Naive thymus-derived CD4-positive, alpha-beta T cell (primary cell): ENCODE measurements at regions of chr13 and their contacts with region 1.

Region 1: DNA sequence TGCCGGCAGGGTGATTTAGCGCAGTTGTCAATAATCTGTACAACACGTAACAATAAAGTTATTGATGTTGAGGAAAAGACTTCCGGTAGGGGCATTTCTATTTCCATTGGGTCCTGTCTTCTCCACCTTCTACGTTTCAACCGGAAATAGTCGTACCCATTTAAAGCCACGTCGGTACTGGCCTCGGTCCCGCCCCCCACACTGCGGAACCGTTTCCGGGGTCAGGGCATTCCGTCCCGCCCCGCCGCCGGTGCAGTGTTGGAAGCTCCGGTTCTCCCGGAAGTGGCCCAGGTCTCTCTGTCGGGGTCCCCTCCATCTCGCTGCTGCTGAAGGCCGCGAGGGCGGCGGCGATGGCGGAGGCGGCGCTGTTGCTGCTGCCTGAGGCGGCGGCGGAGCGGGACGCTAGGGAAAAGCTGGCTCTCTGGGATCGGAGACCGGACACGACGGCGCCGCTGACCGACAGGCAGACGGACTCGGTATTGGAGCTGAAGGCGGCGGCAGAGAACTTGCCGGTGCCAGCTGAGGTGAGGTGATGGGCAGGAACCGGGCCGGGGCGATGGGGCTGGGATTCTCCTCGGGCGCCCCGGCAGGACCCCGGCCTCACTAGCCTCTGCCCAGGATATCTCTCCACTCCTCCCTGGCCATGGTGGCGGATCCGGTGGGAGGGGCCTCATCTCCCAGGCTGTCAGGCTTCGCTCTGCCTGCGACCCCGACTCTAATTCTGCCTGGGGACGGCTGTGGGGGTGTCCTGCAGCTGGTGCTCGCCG is at the start of gene COG3:
- DNase-seq: peak; percentile 87 to 97 (median 96)
- ATAC-seq: peak; percentile 98
- H3K4me3 ChIP-seq: peak within 1 kb of the TSS; percentile 49
- H3K4me3 Mint-ChIP-seq: peak within 1 kb of the TSS; percentile 90 to 97 (median 95)
- H3K27ac ChIP-seq: peak within 1 kb of the TSS; percentile 92
- H3K27ac Mint-ChIP-seq: peak within 1 kb of the TSS; percentile 81 to 98 (median 94)
- H3K4me1 ChIP-seq: peaks cover 10 to 28% of the 10 kb centered on the region in 2 donors
- H3K4me1 Mint-ChIP-seq: peaks cover 33 to 74% (median 59%) of the 10 kb centered on the region in 7 donors
- H3K27me3 ChIP-seq: no peaks in the 10 kb centered on the region
- H3K27me3 Mint-ChIP-seq: no peaks in the 10 kb centered on the region
- total RNA-seq, gene COG3: 29.7 to 50.1 (median 43.4) TPM

Region 2: DNA sequence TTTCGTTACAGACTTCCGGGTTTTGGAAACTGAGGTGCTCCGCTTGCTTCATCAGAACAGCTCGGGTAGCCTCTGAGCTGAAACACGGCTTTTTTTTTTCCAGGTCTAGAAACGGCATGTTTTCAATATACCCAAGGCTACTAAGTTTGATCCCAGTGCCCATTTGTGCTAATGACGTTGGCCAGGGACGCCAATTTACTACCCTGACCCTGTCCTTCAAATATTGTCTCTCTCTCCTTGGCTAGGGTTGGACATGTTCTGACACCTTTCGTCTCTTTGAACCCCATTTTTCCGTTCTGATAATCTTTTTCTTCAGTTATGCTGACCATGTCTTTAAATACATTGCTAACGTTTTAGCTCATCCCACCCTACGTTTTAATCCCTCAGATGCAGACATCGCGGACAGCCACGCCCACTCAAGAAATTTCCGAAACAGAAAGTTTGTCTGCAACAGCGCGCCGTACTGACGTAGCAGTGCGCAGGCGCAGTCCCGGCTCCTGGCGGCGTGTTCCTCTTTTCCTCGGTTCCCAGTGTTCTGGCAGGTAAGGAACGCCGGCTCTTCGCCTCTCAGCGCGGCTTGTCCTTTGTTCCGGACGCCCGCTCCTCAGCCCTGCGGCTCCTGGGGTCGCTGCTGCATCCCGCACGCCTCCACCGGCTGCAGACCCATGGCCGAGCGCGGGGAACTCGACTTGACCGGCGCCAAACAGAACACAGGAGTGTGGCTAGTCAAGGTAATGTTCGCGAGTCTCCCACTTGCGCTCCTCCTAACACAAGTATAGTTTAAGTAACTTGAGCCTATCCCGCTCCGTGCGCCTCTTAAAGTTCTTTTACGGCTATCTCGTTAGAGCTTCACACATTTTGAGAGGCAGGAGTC is 344.6 kb before region 1 on chr13 and contains the start of gene GTF2F2:
- CTCF ChIA-PET with region 1: no interaction called
- POLR2A ChIA-PET with region 1: no interaction called
- intact Hi-C with region 1: loop called in 1 of 2 experiments (anchors 1 kb)
- DNase-seq: peak; percentile 81 to 89 (median 86)
- ATAC-seq: peak; percentile 80
- H3K4me3 ChIP-seq: peak within 1 kb of the TSS; percentile 80
- H3K4me3 Mint-ChIP-seq: no peak within 1 kb of the TSS
- H3K27ac ChIP-seq: peak within 1 kb of the TSS; percentile 91
- H3K27ac Mint-ChIP-seq: no peak within 1 kb of the TSS
- H3K4me1 ChIP-seq: peaks cover 16 to 21% of the 10 kb centered on the region in 2 donors
- H3K4me1 Mint-ChIP-seq: peaks cover 6 to 17% (median 13%) of the 10 kb centered on the region in 7 donors
- H3K27me3 ChIP-seq: no peaks in the 10 kb centered on the region
- H3K27me3 Mint-ChIP-seq: no peaks in the 10 kb centered on the region
- total RNA-seq, gene GTF2F2: 13.7 to 20.4 (median 15.2) TPM

Region 3: DNA sequence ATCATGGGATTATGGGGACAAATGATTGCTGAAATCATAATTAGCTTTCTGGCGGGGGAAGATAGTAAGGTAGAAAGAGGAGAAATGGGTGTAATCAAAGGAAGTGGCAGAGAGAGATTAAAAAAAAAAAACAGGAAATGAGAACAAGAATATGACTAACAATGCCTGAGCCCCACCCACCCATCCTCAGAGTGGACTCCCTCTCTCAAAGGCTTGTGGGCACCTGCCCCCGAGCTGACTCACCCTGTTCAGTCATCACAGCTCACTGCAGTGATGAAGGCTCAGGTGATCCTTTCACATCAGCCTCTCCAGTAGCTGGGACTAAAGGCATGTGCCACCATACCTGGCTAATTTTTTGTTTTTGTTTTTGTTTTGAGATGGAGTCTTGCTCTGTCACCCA is 97.5 kb before region 1 on chr13:
- CTCF ChIA-PET with region 1: interaction called, 6 read pairs
- POLR2A ChIA-PET with region 1: interaction called, 7 read pairs
- intact Hi-C with region 1: loop called (anchors 1 kb)
- DNase-seq: peak; percentile 38 to 93 (median 82)
- ATAC-seq: peak; percentile 99
- H3K4me3 ChIP-seq: no peak overlapping the region
- H3K4me3 Mint-ChIP-seq: peak overlapping the region; percentile 48 to 80 (median 67)
- H3K27ac ChIP-seq: peak overlapping the region; percentile 31
- H3K27ac Mint-ChIP-seq: peak overlapping the region; percentile 81 to 96 (median 90)
- H3K4me1 ChIP-seq: peaks cover 25 to 27% of the 10 kb centered on the region in 2 donors
- H3K4me1 Mint-ChIP-seq: peaks cover 48 to 62% (median 60%) of the 10 kb centered on the region in 7 donors
- H3K27me3 ChIP-seq: no peaks in the 10 kb centered on the region
- H3K27me3 Mint-ChIP-seq: no peaks in the 10 kb centered on the region

Region 4: DNA sequence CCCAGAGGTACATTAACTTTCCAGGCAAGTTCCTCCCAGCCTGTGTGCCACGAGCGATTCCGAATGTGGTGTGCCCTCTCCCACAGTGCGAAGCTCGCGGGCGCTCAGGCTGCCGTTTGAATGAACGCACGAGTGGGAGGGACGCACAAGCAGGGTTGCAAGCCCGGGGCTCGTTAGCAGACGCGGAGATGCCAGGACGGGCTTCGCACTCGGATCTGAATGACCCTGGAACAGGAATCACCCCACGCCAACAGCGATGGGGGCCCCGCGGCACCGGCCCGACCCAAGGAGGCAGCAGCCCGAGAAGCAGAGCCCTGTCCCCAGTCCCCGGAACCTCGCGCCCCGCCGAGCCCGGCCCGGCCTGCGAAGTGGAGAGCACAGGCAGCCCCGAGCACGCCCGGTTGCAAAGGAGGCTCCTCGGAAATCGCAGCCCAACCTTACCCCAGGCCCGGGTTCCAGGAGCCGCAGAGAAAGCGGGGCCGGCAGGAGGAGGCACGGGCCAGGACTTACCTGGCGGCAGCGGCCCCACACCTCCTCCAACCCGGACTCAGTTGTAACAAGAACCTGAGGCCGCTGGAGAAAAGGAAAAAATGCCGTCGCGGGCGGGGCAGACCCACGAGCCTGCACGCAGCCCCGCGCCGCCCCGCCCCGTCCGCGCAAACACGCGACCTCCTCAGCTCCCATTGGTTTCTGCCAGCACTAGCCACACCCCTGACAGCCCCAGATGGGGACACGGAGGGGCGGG is 46.9 kb before region 1 on chr13 and contains the start of gene SLC25A30:
- CTCF ChIA-PET with region 1: interaction called, 7 read pairs
- POLR2A ChIA-PET with region 1: interaction called, 37 read pairs
- intact Hi-C with region 1: loop called (anchors 1 kb)
- DNase-seq: peak; percentile 73 to 90 (median 87)
- ATAC-seq: peak; percentile 97
- H3K4me3 ChIP-seq: peak within 1 kb of the TSS; percentile 97
- H3K4me3 Mint-ChIP-seq: peak within 1 kb of the TSS; percentile 90 to 98 (median 96)
- H3K27ac ChIP-seq: peak within 1 kb of the TSS; percentile 79
- H3K27ac Mint-ChIP-seq: peak within 1 kb of the TSS; percentile 92 to 99 (median 96)
- H3K4me1 ChIP-seq: peaks cover 4 to 21% of the 10 kb centered on the region in 2 donors
- H3K4me1 Mint-ChIP-seq: peaks cover 0 to 36% (median 27%) of the 10 kb centered on the region in 7 donors
- H3K27me3 ChIP-seq: no peaks in the 10 kb centered on the region
- H3K27me3 Mint-ChIP-seq: no peaks in the 10 kb centered on the region
- total RNA-seq, gene SLC25A30: 13.3 to 29.4 (median 23.6) TPM

Region 5: GRCh38 chr13:45490068-45490467 is 25.2 kb after region 1 on chr13:
- CTCF ChIA-PET with region 1: no interaction called
- POLR2A ChIA-PET with region 1: no interaction called
- intact Hi-C with region 1: loop called in 1 of 2 experiments (anchors 2 kb)
- DNase-seq: peak in 7 of 9 donors; percentile 20 to 52 (median 33)
- ATAC-seq: peak; percentile 67
- H3K4me3 ChIP-seq: no peak overlapping the region
- H3K4me3 Mint-ChIP-seq: no peak overlapping the region
- H3K27ac ChIP-seq: no peak overlapping the region
- H3K27ac Mint-ChIP-seq: peak overlapping the region in 2 of 9 donors; percentile 16 to 31
- H3K4me1 ChIP-seq: no peaks in the 10 kb centered on the region
- H3K4me1 Mint-ChIP-seq: peaks cover 0 to 6% (median 4%) of the 10 kb centered on the region in 7 donors
- H3K27me3 ChIP-seq: no peaks in the 10 kb centered on the region
- H3K27me3 Mint-ChIP-seq: no peaks in the 10 kb centered on the region

Region 6: DNA sequence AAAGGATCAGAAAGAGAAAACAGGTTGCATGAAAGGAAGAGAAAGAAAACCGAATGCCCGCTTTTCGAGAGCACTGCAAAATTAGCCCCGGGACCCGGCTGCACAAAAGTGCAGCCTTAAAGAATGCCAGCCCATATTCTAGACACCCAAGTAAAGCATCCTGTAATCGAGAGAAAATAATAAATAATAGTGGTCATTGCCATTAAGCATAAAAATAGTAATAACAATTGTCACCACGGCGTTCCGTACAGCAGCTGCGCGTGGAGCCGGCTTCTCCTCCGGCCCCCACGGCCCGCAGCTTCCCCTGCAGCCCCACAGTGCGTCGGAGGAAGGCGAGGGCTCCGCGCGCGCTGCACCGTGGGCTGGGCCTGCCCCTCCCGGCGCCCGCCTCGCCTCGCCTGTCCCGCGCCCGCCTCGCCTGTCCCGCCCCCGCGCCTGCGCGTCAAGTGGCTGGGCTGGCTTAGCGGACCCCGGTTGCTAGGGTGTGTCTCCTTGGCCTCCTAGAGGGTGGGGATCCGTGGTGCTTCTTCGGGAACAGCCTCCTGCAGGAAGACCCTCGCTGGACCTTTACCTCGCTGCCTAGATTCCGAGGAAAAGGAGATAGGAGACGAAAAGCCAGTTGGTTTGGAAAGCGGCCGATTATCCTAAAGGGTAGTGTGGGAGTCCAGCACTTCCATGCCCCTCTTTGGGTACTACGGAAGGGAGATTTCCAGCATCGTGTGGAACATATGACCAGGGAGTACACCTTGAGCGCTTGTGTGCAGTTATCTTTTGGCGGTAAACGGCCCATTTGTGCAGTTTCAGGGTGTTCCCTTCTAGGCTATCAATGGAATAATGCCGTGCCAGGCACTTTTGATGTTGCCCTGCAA is 746.8 kb after region 1 on chr13 and contains the start of gene LRRC63:
- CTCF ChIA-PET with region 1: no interaction called
- POLR2A ChIA-PET with region 1: no interaction called
- intact Hi-C with region 1: loop called in 1 of 2 experiments (anchors 1 kb)
- DNase-seq: peak; percentile 69 to 88 (median 80)
- ATAC-seq: peak; percentile 98
- H3K4me3 ChIP-seq: peak within 1 kb of the TSS; percentile 81
- H3K4me3 Mint-ChIP-seq: peak within 1 kb of the TSS; percentile 83 to 100 (median 93)
- H3K27ac ChIP-seq: peak within 1 kb of the TSS; percentile 88
- H3K27ac Mint-ChIP-seq: peak within 1 kb of the TSS; percentile 91 to 98 (median 94)
- H3K4me1 ChIP-seq: peaks cover 5 to 8% of the 10 kb centered on the region in 2 donors
- H3K4me1 Mint-ChIP-seq: peaks cover 7 to 37% (median 26%) of the 10 kb centered on the region in 7 donors
- H3K27me3 ChIP-seq: no peaks in the 10 kb centered on the region
- H3K27me3 Mint-ChIP-seq: peaks cover 0 to 6% (median 0%) of the 10 kb centered on the region in 5 donors
- total RNA-seq, gene LRRC63: 0.19 to 0.80 (median 0.49) TPM

Region 7: GRCh38 chr13:46687810-46688209 is 1222.9 kb after region 1 on chr13:
- CTCF ChIA-PET with region 1: no interaction called
- POLR2A ChIA-PET with region 1: no interaction called
- intact Hi-C with region 1: no loop called
- DNase-seq: peak in 2 of 9 donors; percentile 10 to 12
- ATAC-seq: peak; percentile 60
- H3K4me3 ChIP-seq: no peak overlapping the region
- H3K4me3 Mint-ChIP-seq: no peak overlapping the region
- H3K27ac ChIP-seq: no peak overlapping the region
- H3K27ac Mint-ChIP-seq: peak overlapping the region in 2 of 9 donors; percentile 25 to 43
- H3K4me1 ChIP-seq: peaks cover 0 to 6% of the 10 kb centered on the region in 2 donors
- H3K4me1 Mint-ChIP-seq: peaks cover 6 to 32% (median 16%) of the 10 kb centered on the region in 7 donors
- H3K27me3 ChIP-seq: no peaks in the 10 kb centered on the region
- H3K27me3 Mint-ChIP-seq: no peaks in the 10 kb centered on the region